ENCODE measurements at regions of chr11 and their contacts with region 1.

Region 1: DNA sequence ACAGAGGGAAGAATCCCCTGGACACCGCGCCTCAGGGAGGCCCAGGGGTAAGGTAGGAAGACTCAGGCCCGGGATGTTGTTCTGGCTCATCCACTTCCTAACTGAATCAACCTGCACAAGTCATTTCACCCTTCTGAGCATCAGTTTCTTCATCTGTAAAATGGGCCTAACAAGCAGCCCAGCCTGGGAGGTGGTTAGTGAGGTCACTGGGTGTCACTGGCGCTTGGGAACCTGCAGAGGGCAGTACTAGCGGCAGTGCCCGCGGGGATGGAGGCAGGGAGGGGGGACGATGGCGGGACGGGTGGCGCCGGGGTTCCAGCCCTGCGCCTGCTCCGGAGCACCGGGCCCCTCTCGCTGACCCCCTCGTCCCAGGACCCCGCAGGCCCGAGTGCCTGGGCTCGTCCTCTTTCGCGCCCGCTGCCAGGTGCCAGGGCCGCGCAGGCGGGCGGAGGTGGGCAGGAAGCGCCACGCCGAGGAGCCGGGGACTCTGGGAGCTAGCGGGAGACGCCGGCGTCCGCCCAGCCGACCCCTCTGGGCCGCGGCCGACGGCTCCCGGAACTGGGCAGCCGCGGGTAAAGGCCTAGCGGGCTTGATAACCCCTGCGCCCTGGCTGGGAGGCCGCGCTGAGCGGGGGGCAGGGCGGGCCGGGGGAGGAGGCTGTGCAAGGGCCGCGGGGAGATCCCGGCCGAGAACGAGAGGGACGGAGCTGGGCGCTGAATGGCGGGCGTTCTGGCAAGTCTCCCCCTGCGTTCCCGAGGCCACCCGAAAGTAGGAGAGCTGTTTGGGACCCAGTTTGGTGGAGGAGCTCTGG is at the start of gene NLRX1:
- DNase-seq: peak; percentile 95
- H3K4me3 Mint-ChIP-seq: peak within 1 kb of the TSS; percentile 94
- H3K27ac Mint-ChIP-seq: peak within 1 kb of the TSS; percentile 94
- H3K4me1 Mint-ChIP-seq: peaks cover 16% of the 10 kb centered on the region
- H3K27me3 Mint-ChIP-seq: no peaks in the 10 kb centered on the region
- total RNA-seq, gene NLRX1: 23.3 and 25.0 TPM in 2 replicates

Region 2: DNA sequence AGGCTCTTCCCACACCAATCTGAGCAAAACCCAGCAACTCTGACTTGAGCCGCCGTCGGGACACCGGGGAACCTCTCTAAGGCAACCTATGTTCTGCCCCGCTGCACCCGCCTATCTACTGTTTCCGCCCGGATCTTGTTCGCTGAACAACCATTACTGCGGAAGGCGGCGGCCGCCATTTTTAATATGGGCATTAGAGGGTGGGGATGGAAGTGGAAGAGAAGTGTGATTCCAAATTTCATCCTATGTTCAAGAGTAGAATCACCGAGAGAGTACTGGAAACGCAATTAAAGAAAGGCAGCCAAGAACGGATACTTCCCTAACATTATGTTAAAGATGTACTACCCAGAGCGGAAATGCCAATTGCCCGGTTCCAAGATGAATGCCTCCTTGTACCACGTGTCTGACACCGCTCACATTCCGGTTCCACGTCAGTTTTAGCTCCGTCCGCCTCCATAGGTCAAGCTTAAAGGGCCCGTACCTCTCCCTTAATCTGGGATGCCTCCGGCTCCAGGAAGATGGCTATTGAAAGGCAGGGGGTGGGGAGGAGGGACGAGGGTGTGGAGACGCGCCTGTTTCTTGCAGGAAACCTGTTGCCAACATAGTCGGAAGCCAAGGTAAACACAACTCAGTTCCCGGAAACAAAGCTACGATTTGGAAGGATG is 66.8 kb before region 1 on chr11 and contains the start of gene DPAGT1:
- intact Hi-C with region 1: no loop called
- DNase-seq: peak; percentile 96
- H3K4me3 Mint-ChIP-seq: peak within 1 kb of the TSS; percentile 92
- H3K27ac Mint-ChIP-seq: peak within 1 kb of the TSS; percentile 99
- H3K4me1 Mint-ChIP-seq: peaks cover 40% of the 10 kb centered on the region
- H3K27me3 Mint-ChIP-seq: no peaks in the 10 kb centered on the region
- total RNA-seq, gene DPAGT1: 76.1 and 79.4 TPM in 2 replicates

Region 3: GRCh38 chr11:119121008-119121810 is 47.5 kb before region 1 on chr11 and contains the start of gene HINFP:
- intact Hi-C with region 1: loop called (anchors 2 kb)
- DNase-seq: peak; percentile 100
- H3K4me3 Mint-ChIP-seq: peak within 1 kb of the TSS; percentile 98
- H3K27ac Mint-ChIP-seq: peak within 1 kb of the TSS; percentile 89
- H3K4me1 Mint-ChIP-seq: peaks cover 26% of the 10 kb centered on the region
- H3K27me3 Mint-ChIP-seq: no peaks in the 10 kb centered on the region
- total RNA-seq, gene HINFP: 34.9 and 41.4 TPM in 2 replicates

Region 4: DNA sequence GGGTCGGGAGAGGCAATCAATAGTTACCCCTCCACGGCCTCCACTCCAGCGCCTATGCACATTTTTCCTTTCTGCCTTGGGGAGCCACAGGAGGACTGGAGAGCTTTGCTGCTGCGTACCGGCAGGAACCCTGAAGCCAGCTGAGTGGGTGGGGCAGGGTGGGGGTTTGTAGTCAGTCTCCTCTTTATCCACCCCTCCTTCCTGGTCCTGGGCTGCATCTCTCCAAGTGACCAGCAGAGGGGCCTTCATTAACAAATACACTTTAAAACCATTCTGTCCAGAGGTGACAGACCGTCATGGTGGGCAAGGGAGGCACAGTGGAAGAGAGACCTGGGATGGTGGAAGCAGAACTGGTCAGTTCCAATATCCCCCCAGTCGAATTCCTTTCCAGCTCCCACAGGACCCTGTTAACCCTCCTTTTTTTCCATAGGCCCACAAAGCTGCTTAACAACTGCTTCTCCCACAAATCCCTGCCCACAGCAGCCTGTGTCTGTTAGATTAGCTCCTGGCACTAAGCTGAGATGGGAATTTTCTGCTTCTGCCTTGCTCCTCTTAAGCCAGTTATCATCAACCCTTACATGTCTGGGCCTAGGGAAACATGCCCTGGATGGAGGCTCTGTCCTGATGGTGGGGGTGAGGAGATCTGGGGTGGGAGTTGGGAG is 23.7 kb before region 1 on chr11:
- intact Hi-C with region 1: loop called (anchors 2 kb)
- DNase-seq: peak; percentile 74
- H3K4me3 Mint-ChIP-seq: no peak overlapping the region
- H3K27ac Mint-ChIP-seq: no peak overlapping the region
- H3K4me1 Mint-ChIP-seq: peaks cover 6% of the 10 kb centered on the region
- H3K27me3 Mint-ChIP-seq: peaks cover 42% of the 10 kb centered on the region

Region 5: GRCh38 chr11:119196833-119197483 is 28.3 kb after region 1 on chr11:
- intact Hi-C with region 1: loop called (anchors 1 kb)
- DNase-seq: peak; percentile 93
- H3K4me3 Mint-ChIP-seq: no peak overlapping the region
- H3K27ac Mint-ChIP-seq: no peak overlapping the region
- H3K4me1 Mint-ChIP-seq: peaks cover 6% of the 10 kb centered on the region
- H3K27me3 Mint-ChIP-seq: no peaks in the 10 kb centered on the region

Region 6: GRCh38 chr11:119533921-119534736 is 365.5 kb after region 1 on chr11:
- intact Hi-C with region 1: no loop called
- DNase-seq: peak; percentile 85
- H3K4me3 Mint-ChIP-seq: no peak overlapping the region
- H3K27ac Mint-ChIP-seq: no peak overlapping the region
- H3K4me1 Mint-ChIP-seq: peaks cover 2% of the 10 kb centered on the region
- H3K27me3 Mint-ChIP-seq: peaks cover 4% of the 10 kb centered on the region